ENCODE measurements at regions of chr12 and their contacts with region 1.

Region 1: DNA sequence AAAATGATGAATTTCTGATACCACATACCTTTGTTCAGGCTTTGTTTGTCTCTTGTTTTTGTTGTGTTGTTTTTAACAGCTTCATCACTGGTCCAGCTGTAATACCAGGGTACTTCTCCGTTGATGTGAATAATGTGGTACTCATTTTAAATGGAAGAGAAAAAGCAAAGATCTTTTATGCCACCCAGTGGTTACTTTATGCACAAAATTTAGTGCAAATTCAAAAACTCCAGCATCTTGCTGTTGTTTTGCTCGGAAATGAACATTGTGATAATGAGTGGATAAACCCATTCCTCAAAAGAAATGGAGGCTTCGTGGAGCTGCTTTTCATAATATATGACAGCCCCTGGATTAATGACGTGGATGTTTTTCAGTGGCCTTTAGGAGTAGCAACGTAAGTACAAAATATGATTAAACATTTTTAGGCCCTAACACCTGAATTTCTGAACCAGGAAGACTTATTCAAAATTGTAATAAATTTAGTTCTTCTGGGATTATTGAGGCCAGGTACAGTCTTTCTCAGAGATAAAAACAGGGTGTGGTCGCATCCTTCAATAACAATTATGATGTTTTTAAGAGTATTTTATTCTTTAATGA is 22.4 kb downstream of the RXYLT1 start:
- DNase-seq: no peak
- ATAC-seq: no peak
- H3K4me3 Mint-ChIP-seq: no peak overlapping the region
- H3K27ac Mint-ChIP-seq: no peak overlapping the region
- H3K4me1 Mint-ChIP-seq: no peaks in the 10 kb centered on the region
- H3K27me3 Mint-ChIP-seq: no peaks in the 10 kb centered on the region
- CTCF ChIP-seq: no peak

Region 2: GRCh38 chr12:63420206-63420644 is 381.9 kb before region 1 on chr12:
- CTCF ChIA-PET with region 1: interaction called, 8 read pairs
- POLR2A ChIA-PET with region 1: no interaction called
- intact Hi-C with region 1: loop called (anchors 1 kb)
- DNase-seq: no peak
- ATAC-seq: no peak
- H3K4me3 Mint-ChIP-seq: no peak overlapping the region
- H3K27ac Mint-ChIP-seq: no peak overlapping the region
- H3K4me1 Mint-ChIP-seq: no peaks in the 10 kb centered on the region
- H3K27me3 Mint-ChIP-seq: no peaks in the 10 kb centered on the region
- CTCF ChIP-seq: no peak

Region 3: GRCh38 chr12:63668028-63668799 is 133.9 kb before region 1 on chr12 and contains the start of gene DPY19L2:
- CTCF ChIA-PET with region 1: interaction called, 4 read pairs
- POLR2A ChIA-PET with region 1: no interaction called
- intact Hi-C with region 1: loop called (anchors 1 kb)
- DNase-seq: no peak
- ATAC-seq: peak; percentile 37
- H3K4me3 Mint-ChIP-seq: peak within 1 kb of the TSS; percentile 76
- H3K27ac Mint-ChIP-seq: no peak within 1 kb of the TSS
- H3K4me1 Mint-ChIP-seq: peaks cover 19% of the 10 kb centered on the region
- H3K27me3 Mint-ChIP-seq: peaks cover 17% of the 10 kb centered on the region
- CTCF ChIP-seq: no peak
- total RNA-seq, gene DPY19L2: 0.69 and 0.73 TPM in 2 replicates

Region 4: DNA sequence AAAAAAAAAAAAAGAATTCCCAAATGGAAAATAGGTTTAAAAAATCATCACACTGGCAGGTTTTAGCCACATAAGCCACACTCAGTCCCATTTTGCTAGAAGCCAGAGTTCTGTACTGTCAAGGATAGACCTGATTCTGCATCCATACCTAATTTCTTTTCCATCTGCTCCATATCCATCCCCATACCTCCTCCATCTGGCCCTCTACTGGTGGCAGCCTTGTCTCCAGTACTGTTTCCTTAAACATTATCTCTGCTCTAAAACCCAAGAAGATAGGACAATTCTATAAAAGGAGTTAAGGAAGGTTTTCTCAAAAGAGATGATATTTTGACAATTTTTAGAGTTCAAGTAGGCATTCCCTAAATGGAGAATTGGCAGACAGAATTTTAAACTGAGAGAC is 48.4 kb before region 1 on chr12:
- CTCF ChIA-PET with region 1: no interaction called
- POLR2A ChIA-PET with region 1: no interaction called
- intact Hi-C with region 1: no loop called
- DNase-seq: no peak
- ATAC-seq: no peak
- H3K4me3 Mint-ChIP-seq: no peak overlapping the region
- H3K27ac Mint-ChIP-seq: no peak overlapping the region
- H3K4me1 Mint-ChIP-seq: no peaks in the 10 kb centered on the region
- H3K27me3 Mint-ChIP-seq: peaks cover 12% of the 10 kb centered on the region
- CTCF ChIP-seq: no peak

Region 5: DNA sequence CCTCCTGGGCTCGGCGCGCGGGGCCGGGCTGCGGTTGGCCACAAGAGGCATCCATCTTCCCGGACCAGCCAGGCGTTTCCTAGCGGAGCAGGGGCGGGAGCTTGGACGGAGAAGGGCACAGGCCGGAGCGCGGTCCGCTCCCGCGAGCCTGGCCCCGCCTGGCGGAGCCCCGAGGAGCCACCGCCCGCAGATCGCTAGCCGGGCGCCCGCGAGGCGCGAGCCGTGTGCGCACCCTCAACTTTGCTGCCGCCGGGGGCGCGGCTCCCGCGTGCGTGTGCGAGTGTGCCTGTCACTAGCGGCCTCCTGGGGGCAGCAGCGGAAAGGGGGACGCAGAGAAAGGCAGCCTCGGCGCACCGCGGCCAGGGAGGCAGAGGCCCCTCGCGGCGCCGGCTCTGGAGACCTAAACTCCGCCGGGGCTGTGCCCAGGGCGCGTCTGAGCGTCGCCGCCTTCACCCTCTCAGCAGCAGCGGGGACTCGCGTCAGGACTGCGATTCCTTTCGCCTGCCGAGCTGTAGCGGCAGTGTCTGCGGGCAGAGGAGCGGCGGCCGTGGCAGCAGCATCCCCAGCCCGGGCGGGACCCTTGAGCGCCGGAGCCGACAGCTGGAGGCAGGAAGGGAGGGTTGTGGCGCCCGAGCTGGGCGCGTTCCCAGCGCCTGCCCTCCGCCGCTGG is 41.7 kb after region 1 on chr12:
- CTCF ChIA-PET with region 1: no interaction called
- POLR2A ChIA-PET with region 1: no interaction called
- intact Hi-C with region 1: no loop called
- DNase-seq: peak; percentile 69
- ATAC-seq: peak; percentile 92
- H3K4me3 Mint-ChIP-seq: peak overlapping the region; percentile 74
- H3K27ac Mint-ChIP-seq: no peak overlapping the region
- H3K4me1 Mint-ChIP-seq: peaks cover 9% of the 10 kb centered on the region
- H3K27me3 Mint-ChIP-seq: peaks cover 24% of the 10 kb centered on the region
- CTCF ChIP-seq: peak; percentile 43

Region 6: GRCh38 chr12:63869624-63870023 is 67.5 kb after region 1 on chr12:
- CTCF ChIA-PET with region 1: no interaction called
- POLR2A ChIA-PET with region 1: no interaction called
- intact Hi-C with region 1: no loop called
- DNase-seq: no peak
- ATAC-seq: no peak
- H3K4me3 Mint-ChIP-seq: no peak overlapping the region
- H3K27ac Mint-ChIP-seq: no peak overlapping the region
- H3K4me1 Mint-ChIP-seq: no peaks in the 10 kb centered on the region
- H3K27me3 Mint-ChIP-seq: peaks cover 13% of the 10 kb centered on the region
- CTCF ChIP-seq: no peak

Region 7: DNA sequence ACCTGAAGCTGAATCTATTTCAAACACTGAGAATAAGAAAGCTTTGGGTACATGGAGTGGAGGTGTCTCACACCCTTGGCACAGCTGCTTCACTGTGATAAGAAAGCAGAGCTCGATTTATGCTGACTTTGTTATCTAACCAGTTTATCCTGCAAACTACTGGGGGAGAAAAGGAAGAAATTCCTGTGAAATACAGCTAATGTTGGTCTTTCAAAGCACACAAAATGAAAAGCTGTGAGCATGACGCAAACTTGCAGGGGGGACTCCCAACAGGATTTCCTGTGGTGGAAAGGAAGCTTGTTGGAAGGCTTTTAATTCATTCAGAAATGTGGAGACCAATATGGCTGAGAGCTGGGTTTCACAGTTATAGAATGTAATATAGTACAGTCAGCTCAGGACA is 95.8 kb after region 1 on chr12:
- CTCF ChIA-PET with region 1: no interaction called
- POLR2A ChIA-PET with region 1: no interaction called
- intact Hi-C with region 1: no loop called
- DNase-seq: no peak
- ATAC-seq: no peak
- H3K4me3 Mint-ChIP-seq: no peak overlapping the region
- H3K27ac Mint-ChIP-seq: no peak overlapping the region
- H3K4me1 Mint-ChIP-seq: no peaks in the 10 kb centered on the region
- H3K27me3 Mint-ChIP-seq: peaks cover 3% of the 10 kb centered on the region
- CTCF ChIP-seq: no peak